Naive thymus-derived CD8-positive, alpha-beta T cell (primary cell): ENCODE measurements at regions of chr17 and their contacts with region 1.

Region 1: DNA sequence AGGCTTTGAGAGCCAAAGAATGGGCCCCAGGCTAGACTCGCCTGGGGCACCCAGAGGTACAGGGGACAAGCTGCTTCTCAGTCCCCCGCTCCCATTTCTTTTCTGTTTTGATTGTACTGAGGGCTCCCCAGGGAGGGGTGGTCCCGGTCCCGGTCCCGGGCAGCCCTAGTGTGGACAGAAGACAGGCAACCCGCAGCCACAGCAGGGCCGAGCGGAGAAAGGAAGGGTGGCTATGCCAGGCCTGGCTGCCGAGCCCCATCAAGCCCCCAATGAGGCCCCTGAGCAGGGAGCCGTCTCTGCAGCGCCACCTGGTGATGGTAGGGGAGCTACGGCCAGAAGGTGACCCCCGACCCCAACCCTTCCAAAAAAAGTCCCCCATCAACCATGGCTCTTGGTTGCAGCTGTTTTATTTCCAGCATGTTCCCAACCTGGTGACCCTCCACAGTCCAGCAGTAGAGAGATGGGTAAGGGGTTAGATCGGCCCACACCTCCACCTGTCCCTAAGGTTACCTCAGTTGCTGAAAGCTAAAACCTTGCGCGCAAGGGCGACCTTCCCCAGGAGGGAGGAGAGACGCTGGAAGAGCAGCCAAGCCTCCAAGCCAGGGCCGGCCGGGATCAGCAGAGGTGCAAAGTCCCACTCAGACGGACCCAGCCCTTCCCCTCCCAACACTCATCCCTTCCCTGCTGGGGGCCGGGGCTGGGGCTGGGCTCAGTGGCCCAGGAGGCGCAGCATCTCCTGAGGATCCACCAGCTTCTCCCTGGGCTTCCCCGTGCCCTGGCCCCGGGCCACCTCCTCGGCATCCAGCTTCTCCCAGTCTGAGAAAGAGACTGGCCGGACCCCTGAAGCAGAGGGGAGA is 2.7 kb upstream of the GRIN2C start:
- DNase-seq: peak; percentile 54 to 83 (median 70)
- ATAC-seq: peak; percentile 73 to 74
- H3K4me3 Mint-ChIP-seq: peak overlapping the region in 8 of 10 donors; percentile 10 to 77 (median 65)
- H3K27ac Mint-ChIP-seq: peak overlapping the region in 1 of 10 donors; percentile 69
- H3K4me1 Mint-ChIP-seq: peaks cover 10 to 30% (median 23%) of the 10 kb centered on the region in 4 donors
- H3K27me3 Mint-ChIP-seq: peaks cover 12 to 37% (median 26%) of the 10 kb centered on the region in 5 donors

Region 2: DNA sequence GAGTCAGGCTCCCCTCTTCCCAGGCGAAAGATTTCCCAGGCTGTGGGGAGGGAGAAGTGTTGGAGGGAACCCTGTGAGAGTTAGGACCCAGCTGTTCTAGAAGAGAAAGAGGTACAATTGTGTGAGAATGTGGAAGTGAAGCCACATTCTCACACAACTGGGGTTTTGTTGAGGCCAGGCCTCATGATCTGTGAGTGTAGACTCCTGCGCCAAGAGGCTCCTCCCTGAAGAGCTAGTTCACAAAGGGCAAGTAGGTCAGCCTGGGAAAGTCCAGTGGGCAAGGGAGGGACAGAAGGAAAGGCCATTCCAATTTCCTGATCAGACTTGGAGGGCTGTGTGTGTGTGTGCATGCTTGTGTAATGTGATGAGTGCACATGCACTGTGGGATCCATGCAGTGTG is 164.8 kb before region 1 on chr17:
- POLR2A ChIA-PET with region 1: no interaction called
- DNase-seq: no peak
- ATAC-seq: no peak
- H3K4me3 Mint-ChIP-seq: no peak overlapping the region
- H3K27ac Mint-ChIP-seq: no peak overlapping the region
- H3K4me1 Mint-ChIP-seq: peaks cover 0 to 8% (median 1%) of the 10 kb centered on the region in 4 donors
- H3K27me3 Mint-ChIP-seq: peaks cover 0 to 6% (median 2%) of the 10 kb centered on the region in 5 donors

Region 3: GRCh38 chr17:74790161-74791054 is 71.9 kb before region 1 on chr17:
- POLR2A ChIA-PET with region 1: interaction called, 13 read pairs
- DNase-seq: no peak
- ATAC-seq: peak; percentile 23 to 45
- H3K4me3 Mint-ChIP-seq: peak overlapping the region in 9 of 10 donors; percentile 19 to 73 (median 62)
- H3K27ac Mint-ChIP-seq: peak overlapping the region; percentile 53 to 85 (median 74)
- H3K4me1 Mint-ChIP-seq: peaks cover 18 to 51% (median 38%) of the 10 kb centered on the region in 4 donors
- H3K27me3 Mint-ChIP-seq: no peaks in the 10 kb centered on the region

Region 4: DNA sequence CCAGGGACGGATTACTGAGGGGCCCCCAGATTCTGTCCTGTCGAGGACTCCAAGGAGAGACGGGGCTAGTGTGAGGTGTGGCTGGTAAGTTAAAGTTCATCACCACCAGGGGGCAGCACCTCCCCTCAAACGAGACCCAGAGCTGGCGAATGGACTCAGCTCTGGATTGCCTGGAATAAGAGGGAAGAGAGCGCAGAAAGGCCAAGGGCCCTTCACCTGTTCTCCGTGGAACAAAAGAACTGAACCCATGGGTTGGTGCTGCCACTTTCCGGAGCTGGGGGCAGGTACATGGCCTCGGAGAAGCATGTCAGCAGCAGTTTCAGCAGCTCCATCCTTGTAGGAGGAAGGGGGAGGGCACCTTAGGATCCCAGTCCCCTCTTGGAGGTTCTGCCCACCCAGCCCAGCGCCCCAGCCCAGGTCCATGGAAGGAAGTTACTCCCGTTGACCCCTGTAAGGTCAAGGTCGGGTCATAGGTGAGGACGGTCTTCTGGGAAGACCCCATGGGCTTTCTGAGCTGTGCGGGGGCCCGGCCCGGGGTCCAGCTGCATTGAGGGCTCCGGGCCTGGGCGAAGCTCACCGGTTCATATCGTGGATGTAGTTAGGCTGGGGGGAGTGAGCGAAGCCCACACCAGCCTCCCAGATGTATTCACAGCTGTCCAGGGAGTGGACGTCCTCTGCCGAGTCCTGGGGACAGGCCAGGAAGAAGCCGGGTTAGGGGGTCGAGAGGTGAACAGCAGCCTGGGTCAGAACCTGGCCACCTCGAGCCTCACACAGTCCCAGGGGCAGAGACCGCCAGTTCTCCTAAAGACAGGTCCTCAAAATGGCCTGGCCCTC is 99.5 kb after region 1 on chr17:
- POLR2A ChIA-PET with region 1: no interaction called
- DNase-seq: peak; percentile 63 to 90 (median 79)
- ATAC-seq: peak; percentile 82 to 87
- H3K4me3 Mint-ChIP-seq: peak overlapping the region in 1 of 10 donors; percentile 3
- H3K27ac Mint-ChIP-seq: peak overlapping the region in 2 of 10 donors; percentile 53 to 86
- H3K4me1 Mint-ChIP-seq: peaks cover 3 to 10% (median 4%) of the 10 kb centered on the region in 4 donors
- H3K27me3 Mint-ChIP-seq: no peaks in the 10 kb centered on the region